Activated CD4-positive, alpha-beta memory T cell treated with anti-CD3 and anti-CD28 coated beads, Interleukin-2, amount 10 ng/mL, durations not matched to agents 7 days and 5 days (primary cell): ENCODE measurements at regions of chr3 and their contacts with region 1.

Region 1: GRCh38 chr3:15332405-15333098 is at the start of gene SH3BP5:
- DNase-seq: peak; percentile 80
- H3K4me3 Mint-ChIP-seq: peak within 1 kb of the TSS; percentile 85
- H3K27ac Mint-ChIP-seq: peak within 1 kb of the TSS; percentile 73
- H3K4me1 Mint-ChIP-seq: peaks cover 58% of the 10 kb centered on the region
- H3K27me3 Mint-ChIP-seq: no peaks in the 10 kb centered on the region
- total RNA-seq, gene SH3BP5: 39.0 to 40.9 TPM

Region 2: GRCh38 chr3:15291589-15292541 is 40.7 kb before region 1 on chr3:
- CTCF ChIA-PET with region 1: interaction called, 24 read pairs
- POLR2A ChIA-PET with region 1: interaction called, 5 read pairs
- DNase-seq: peak; percentile 80
- H3K4me3 Mint-ChIP-seq: peak overlapping the region; percentile 58
- H3K27ac Mint-ChIP-seq: peak overlapping the region; percentile 96
- H3K4me1 Mint-ChIP-seq: peaks cover 80% of the 10 kb centered on the region
- H3K27me3 Mint-ChIP-seq: no peaks in the 10 kb centered on the region

Region 3: DNA sequence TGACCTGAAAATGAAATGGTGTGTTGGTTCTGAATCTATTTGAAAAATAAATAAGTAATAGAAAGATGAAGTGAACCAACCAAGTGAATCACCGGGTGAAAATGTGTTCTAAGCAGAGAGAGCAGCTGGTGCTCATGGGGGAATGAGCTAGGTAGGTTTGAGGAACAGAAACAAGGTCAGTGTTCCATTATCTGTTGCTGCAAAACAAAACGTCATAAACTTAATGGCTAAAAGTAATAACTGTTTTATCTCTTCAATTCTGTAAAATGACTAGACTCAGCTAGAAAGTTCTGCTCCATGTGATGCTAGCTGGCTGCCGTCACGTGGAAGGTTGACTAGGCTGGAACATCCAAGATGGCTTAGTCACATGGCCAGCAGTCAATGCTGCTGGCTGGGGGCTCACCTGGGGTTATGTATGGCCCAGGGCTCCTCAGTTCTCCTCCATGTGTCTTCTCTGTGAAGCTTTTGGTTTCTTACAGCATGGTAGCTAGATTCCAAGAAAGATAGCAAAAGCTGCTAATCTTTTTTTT is 13.1 kb after region 1 on chr3:
- CTCF ChIA-PET with region 1: interaction called, 36 read pairs
- POLR2A ChIA-PET with region 1: interaction called, 31 read pairs
- DNase-seq: no peak
- H3K4me3 Mint-ChIP-seq: no peak overlapping the region
- H3K27ac Mint-ChIP-seq: no peak overlapping the region
- H3K4me1 Mint-ChIP-seq: peaks cover 34% of the 10 kb centered on the region
- H3K27me3 Mint-ChIP-seq: peaks cover 8% of the 10 kb centered on the region

Region 4: GRCh38 chr3:15361494-15362212 is 29.1 kb after region 1 on chr3:
- CTCF ChIA-PET with region 1: interaction called, 10 read pairs
- POLR2A ChIA-PET with region 1: interaction called, 12 read pairs
- DNase-seq: peak; percentile 42
- H3K4me3 Mint-ChIP-seq: peak overlapping the region; percentile 11
- H3K27ac Mint-ChIP-seq: peak overlapping the region; percentile 42
- H3K4me1 Mint-ChIP-seq: peaks cover 49% of the 10 kb centered on the region
- H3K27me3 Mint-ChIP-seq: no peaks in the 10 kb centered on the region